ENCODE measurements at regions of chr15 and their contacts with region 1.

Region 1: GRCh38 chr15:40564591-40565332 is at the start of gene CCDC32:
- DNase-seq: peak; percentile 99
- ATAC-seq: peak; percentile 95 to 98
- H3K4me3 ChIP-seq: peak within 1 kb of the TSS; percentile 70 to 92 (median 80)
- H3K27ac ChIP-seq: peak within 1 kb of the TSS; percentile 96 to 99 (median 97)
- H3K4me1 ChIP-seq: peaks cover 42 to 44% of the 10 kb centered on the region in 2 donors
- H3K27me3 ChIP-seq: no peaks in the 10 kb centered on the region
- CTCF ChIP-seq: no peak
- POLR2A ChIP-seq: peak; percentile 92 to 94
- total RNA-seq, gene CCDC32: 11.9 to 24.2 (median 17.2) TPM

Region 2: GRCh38 chr15:40108855-40109735 is 455.7 kb before region 1 on chr15 and contains the start of gene BMF:
- in situ Hi-C with region 1: no loop called
- intact Hi-C with region 1: loop called (anchors 10 kb)
- DNase-seq: peak; percentile 99 to 100
- ATAC-seq: peak; percentile 76 to 80
- H3K4me3 ChIP-seq: peak within 1 kb of the TSS; percentile 62 to 88 (median 64)
- H3K27ac ChIP-seq: peak within 1 kb of the TSS; percentile 81 to 99 (median 92)
- H3K4me1 ChIP-seq: peaks cover 34% of the 10 kb centered on the region in 2 donors
- H3K27me3 ChIP-seq: no peaks in the 10 kb centered on the region
- CTCF ChIP-seq: peak in 3 of 5 experiments; percentile 8 to 30 (median 16)
- POLR2A ChIP-seq: no peak
- total RNA-seq, gene BMF: 0.82 to 11.6 (median 3.2) TPM

Region 3: GRCh38 chr15:40175160-40175559 is 389.6 kb before region 1 on chr15:
- in situ Hi-C with region 1: no loop called
- intact Hi-C with region 1: no loop called
- DNase-seq: no peak
- ATAC-seq: no peak
- H3K4me3 ChIP-seq: no peak overlapping the region
- H3K27ac ChIP-seq: no peak overlapping the region
- H3K4me1 ChIP-seq: no peaks in the 10 kb centered on the region
- H3K27me3 ChIP-seq: no peaks in the 10 kb centered on the region
- CTCF ChIP-seq: no peak
- POLR2A ChIP-seq: no peak

Region 4: DNA sequence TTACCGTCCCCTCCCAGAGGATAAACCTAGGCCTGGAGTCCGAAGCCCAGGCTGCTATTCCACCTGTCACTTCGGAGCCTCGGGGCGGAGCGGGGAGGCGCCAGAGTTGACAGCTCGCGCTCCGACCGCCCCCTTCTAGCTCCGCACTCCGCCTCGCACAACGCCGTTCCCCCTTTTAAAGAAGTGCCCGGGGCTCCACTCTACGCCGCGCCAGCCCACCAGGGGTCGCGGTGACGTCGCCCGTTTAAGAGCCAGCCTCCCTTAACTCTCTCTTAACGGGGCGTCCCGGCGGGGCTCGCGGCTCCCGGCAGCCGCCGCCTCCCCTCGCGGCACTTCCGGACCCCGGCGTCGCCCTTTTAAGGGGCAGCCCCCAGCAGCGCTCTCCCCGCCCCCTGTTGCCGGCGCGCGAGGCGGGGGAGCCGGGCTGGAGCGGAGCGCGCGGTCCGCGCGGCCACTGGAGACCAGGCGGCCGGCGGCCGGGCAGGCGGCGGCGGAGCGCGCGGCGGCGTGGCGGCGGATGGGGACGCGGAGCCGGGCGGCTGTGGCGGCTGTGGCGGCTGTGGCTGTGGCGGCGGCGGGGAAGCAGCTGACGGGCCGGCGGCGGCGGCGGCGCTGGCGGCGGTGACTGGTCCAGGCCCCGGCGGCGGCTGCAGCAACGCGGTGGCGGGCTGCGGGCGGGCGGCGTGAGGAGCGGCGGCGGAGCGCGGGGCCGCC is 241.4 kb before region 1 on chr15 and contains the start of gene INAFM2:
- in situ Hi-C with region 1: no loop called
- intact Hi-C with region 1: no loop called
- DNase-seq: peak; percentile 79 to 89
- ATAC-seq: peak; percentile 81 to 85
- H3K4me3 ChIP-seq: peak within 1 kb of the TSS; percentile 63 to 84 (median 79)
- H3K27ac ChIP-seq: peak within 1 kb of the TSS; percentile 70 to 88 (median 86)
- H3K4me1 ChIP-seq: peaks cover 25 to 26% of the 10 kb centered on the region in 2 donors
- H3K27me3 ChIP-seq: no peaks in the 10 kb centered on the region
- CTCF ChIP-seq: peak; percentile 53 to 88 (median 76)
- POLR2A ChIP-seq: peak; percentile 75 to 78
- total RNA-seq, gene INAFM2: 17.2 to 28.1 (median 17.7) TPM

Region 5: GRCh38 chr15:40440743-40441564 is 123.8 kb before region 1 on chr15 and contains the start of gene BAHD1:
- in situ Hi-C with region 1: no loop called
- intact Hi-C with region 1: loop called (anchors 10 kb)
- DNase-seq: peak; percentile 95 to 96
- ATAC-seq: peak; percentile 83 to 86
- H3K4me3 ChIP-seq: peak within 1 kb of the TSS; percentile 74 to 98 (median 81)
- H3K27ac ChIP-seq: peak within 1 kb of the TSS; percentile 76 to 86 (median 82)
- H3K4me1 ChIP-seq: peaks cover 14 to 20% of the 10 kb centered on the region in 2 donors
- H3K27me3 ChIP-seq: peaks cover 14 to 23% (median 18%) of the 10 kb centered on the region in 3 donors
- CTCF ChIP-seq: peak in 1 of 5 experiments; percentile 13
- POLR2A ChIP-seq: peak; percentile 46 to 47
- total RNA-seq, gene BAHD1: 8.8 to 27.4 (median 13.5) TPM

Region 6: GRCh38 chr15:40513609-40514008 is 51.2 kb before region 1 on chr15:
- in situ Hi-C with region 1: no loop called
- intact Hi-C with region 1: loop called (anchors 5 kb)
- DNase-seq: no peak
- ATAC-seq: no peak
- H3K4me3 ChIP-seq: no peak overlapping the region
- H3K27ac ChIP-seq: no peak overlapping the region
- H3K4me1 ChIP-seq: peaks cover 2 to 8% of the 10 kb centered on the region in 2 donors
- H3K27me3 ChIP-seq: no peaks in the 10 kb centered on the region
- CTCF ChIP-seq: no peak
- POLR2A ChIP-seq: no peak

Region 7: GRCh38 chr15:40550341-40551037 is 14.3 kb before region 1 on chr15:
- in situ Hi-C with region 1: no loop called
- intact Hi-C with region 1: loop called (anchors 1 kb)
- DNase-seq: no peak
- ATAC-seq: peak; percentile 12 to 54
- H3K4me3 ChIP-seq: no peak overlapping the region
- H3K27ac ChIP-seq: peak overlapping the region; percentile 90 to 94 (median 92)
- H3K4me1 ChIP-seq: peaks cover 69 to 74% of the 10 kb centered on the region in 2 donors
- H3K27me3 ChIP-seq: no peaks in the 10 kb centered on the region
- CTCF ChIP-seq: no peak
- POLR2A ChIP-seq: no peak

Region 8: DNA sequence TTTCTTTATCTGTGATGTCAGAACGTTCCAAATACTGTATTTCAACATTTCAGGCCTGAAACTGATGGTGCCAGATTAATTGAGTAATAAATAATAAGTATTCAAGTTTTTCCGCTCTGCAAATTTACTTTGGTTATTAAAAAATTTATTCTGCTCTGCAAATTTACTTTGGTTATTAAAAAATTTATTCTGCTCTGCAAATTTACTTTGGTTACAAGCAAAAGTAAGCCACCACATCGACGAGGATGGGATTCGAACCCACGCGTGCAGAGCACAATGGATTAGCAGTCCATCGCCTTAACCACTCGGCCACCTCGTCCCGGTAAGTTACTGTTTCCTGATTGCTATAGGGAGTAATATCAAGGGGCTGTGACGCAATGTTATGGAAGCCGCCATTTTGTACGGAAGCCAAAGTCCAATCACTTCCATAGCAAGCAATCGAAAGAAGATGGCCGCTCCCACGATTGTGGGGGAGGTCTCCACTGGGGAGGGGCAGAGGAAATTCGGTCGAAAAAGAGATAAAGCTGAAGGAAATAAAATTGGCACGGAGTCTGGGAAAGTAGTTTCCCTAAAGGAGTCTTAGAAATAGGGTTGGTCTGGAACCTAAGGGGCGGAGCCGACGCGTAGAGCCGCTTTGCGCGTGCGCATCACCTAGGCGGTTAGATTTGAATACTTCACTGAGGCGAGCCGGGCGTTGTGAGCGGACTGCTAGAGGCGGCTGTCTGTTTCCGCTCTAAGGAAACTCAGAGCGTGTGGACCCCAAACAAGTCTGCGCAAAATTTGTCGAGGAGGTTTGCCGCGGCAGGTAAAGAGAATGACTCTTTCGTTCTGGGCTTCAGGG is 29.0 kb after region 1 on chr15 and contains the start of gene KNL1:
- in situ Hi-C with region 1: no loop called
- intact Hi-C with region 1: loop called (anchors 2 kb)
- DNase-seq: peak; percentile 83 to 91
- ATAC-seq: peak; percentile 97 to 98
- H3K4me3 ChIP-seq: peak within 1 kb of the TSS; percentile 72 to 88 (median 82)
- H3K27ac ChIP-seq: peak within 1 kb of the TSS; percentile 88 to 97 (median 93)
- H3K4me1 ChIP-seq: peaks cover 9% of the 10 kb centered on the region in 2 donors
- H3K27me3 ChIP-seq: no peaks in the 10 kb centered on the region
- CTCF ChIP-seq: no peak
- POLR2A ChIP-seq: no peak
- total RNA-seq, gene KNL1: 0.10 to 0.33 (median 0.33) TPM in 3 of 4 donors, not detected in the other

Region 9: GRCh38 chr15:40633143-40633542 is 68.4 kb after region 1 on chr15:
- in situ Hi-C with region 1: no loop called
- intact Hi-C with region 1: no loop called
- DNase-seq: no peak
- ATAC-seq: no peak
- H3K4me3 ChIP-seq: no peak overlapping the region
- H3K27ac ChIP-seq: no peak overlapping the region
- H3K4me1 ChIP-seq: no peaks in the 10 kb centered on the region
- H3K27me3 ChIP-seq: no peaks in the 10 kb centered on the region
- CTCF ChIP-seq: no peak
- POLR2A ChIP-seq: no peak

Region 10: DNA sequence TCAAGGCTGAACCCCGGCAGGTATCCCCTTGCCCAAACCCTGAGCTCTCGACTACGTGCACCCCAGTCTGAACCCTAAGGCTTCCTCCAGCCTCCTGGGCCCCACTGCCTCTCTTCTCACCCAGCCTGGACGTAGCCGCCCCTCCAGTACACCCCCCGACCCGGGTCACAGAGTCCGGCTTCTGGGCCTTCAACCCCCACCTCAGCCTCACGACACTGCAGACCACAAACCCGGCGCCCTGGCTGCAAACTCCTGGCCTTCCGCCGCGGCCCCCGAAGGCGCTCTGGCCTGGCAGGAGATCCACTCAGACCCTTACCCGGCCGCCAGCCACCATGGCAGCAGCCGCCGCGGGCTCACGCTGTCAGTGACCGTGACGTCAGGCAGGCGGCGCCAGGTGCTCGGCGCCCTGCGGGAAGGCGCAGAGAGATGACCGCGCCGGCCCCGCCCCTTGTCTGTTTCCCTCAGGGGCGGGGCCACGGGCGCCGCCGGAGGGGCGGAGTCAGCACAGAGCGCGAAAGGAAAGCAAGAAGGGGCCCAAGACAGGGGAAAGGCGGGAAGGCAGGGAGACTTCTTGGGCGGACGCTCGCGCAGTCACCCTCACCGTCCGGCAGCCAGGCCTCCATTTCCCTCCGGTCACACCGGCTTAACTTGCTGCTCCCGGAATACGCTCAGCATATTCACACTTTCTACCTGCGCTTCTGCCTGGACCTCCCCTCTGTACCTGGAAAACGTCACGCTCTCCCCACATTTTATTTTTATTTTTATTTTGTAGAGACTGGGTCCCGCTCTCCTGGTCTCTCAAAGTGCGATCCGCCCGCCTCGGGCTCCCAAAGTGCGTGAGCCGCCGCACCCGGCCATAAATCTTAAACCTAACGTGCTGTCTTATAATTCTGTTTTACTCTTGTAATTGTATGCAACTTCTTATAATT is 190.4 kb after region 1 on chr15 and contains the start of gene RMDN3:
- in situ Hi-C with region 1: no loop called
- intact Hi-C with region 1: loop called (anchors 5 kb)
- DNase-seq: peak; percentile 78 to 88
- ATAC-seq: peak; percentile 90 to 93
- H3K4me3 ChIP-seq: peak within 1 kb of the TSS; percentile 90 to 100 (median 96)
- H3K27ac ChIP-seq: peak within 1 kb of the TSS; percentile 92 to 97 (median 95)
- H3K4me1 ChIP-seq: peaks cover 13 to 15% of the 10 kb centered on the region in 2 donors
- H3K27me3 ChIP-seq: no peaks in the 10 kb centered on the region
- CTCF ChIP-seq: no peak
- POLR2A ChIP-seq: peak; percentile 78 to 80
- total RNA-seq, gene RMDN3: 12.7 to 55.3 (median 19.6) TPM

Region 11: GRCh38 chr15:40843885-40844695 is 279.3 kb after region 1 on chr15 and contains the start of gene SPINT1:
- in situ Hi-C with region 1: no loop called
- intact Hi-C with region 1: no loop called
- DNase-seq: no peak
- ATAC-seq: no peak
- H3K4me3 ChIP-seq: peak within 1 kb of the TSS; percentile 27 to 52 (median 45)
- H3K27ac ChIP-seq: no peak within 1 kb of the TSS
- H3K4me1 ChIP-seq: peaks cover 0 to 13% of the 10 kb centered on the region in 2 donors
- H3K27me3 ChIP-seq: peaks cover 24 to 34% (median 29%) of the 10 kb centered on the region in 3 donors
- CTCF ChIP-seq: no peak
- POLR2A ChIP-seq: no peak
- total RNA-seq, gene SPINT1: 0.42 to 5.0 (median 1.0) TPM in 3 of 4 donors, not detected in the other